ENCODE measurements at regions of chr1 and their contacts with region 1.

Region 1: GRCh38 chr1:160046494-160047110 is 14.8 kb upstream of the PIGM start:
- DNase-seq: peak; percentile 48
- H3K4me3 Mint-ChIP-seq: peak overlapping the region; percentile 55
- H3K27ac Mint-ChIP-seq: peak overlapping the region; percentile 60
- H3K4me1 Mint-ChIP-seq: peaks cover 13% of the 10 kb centered on the region
- H3K27me3 Mint-ChIP-seq: peaks cover 28% of the 10 kb centered on the region

Region 2: DNA sequence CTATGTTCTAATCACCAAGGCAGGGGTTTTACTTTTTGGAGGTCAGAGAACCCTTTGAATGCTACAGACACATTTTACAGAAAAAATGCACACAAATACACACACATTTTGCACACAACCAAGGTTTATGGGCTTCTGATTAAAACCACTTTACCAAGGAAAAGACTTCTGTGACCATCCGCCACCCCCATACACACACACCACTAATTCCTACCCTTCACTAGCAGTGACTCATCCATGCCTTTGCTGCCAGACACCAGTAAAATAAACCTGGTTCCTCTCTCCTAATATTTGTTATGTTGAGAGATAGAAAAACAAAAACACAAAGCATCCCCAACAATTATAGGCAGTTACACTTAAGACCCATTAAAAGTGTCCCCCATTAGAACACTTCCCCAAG is 27.7 kb before region 1 on chr1:
- CTCF ChIA-PET with region 1: interaction called, 11 read pairs
- POLR2A ChIA-PET with region 1: no interaction called
- DNase-seq: no peak
- H3K4me3 Mint-ChIP-seq: no peak overlapping the region
- H3K27ac Mint-ChIP-seq: no peak overlapping the region
- H3K4me1 Mint-ChIP-seq: peaks cover 3% of the 10 kb centered on the region
- H3K27me3 Mint-ChIP-seq: peaks cover 12% of the 10 kb centered on the region

Region 3: GRCh38 chr1:160031365-160032164 is 15.0 kb before region 1 on chr1 and contains the start of gene PIGM:
- CTCF ChIA-PET with region 1: interaction called, 16 read pairs
- POLR2A ChIA-PET with region 1: interaction called, 3 read pairs
- DNase-seq: peak; percentile 97
- H3K4me3 Mint-ChIP-seq: peak within 1 kb of the TSS; percentile 96
- H3K27ac Mint-ChIP-seq: peak within 1 kb of the TSS; percentile 91
- H3K4me1 Mint-ChIP-seq: peaks cover 28% of the 10 kb centered on the region
- H3K27me3 Mint-ChIP-seq: peaks cover 3% of the 10 kb centered on the region
- total RNA-seq, gene PIGM: 5.9 to 6.4 TPM

Region 4: GRCh38 chr1:160058087-160058486 is 11.5 kb after region 1 on chr1:
- CTCF ChIA-PET with region 1: interaction called, 22 read pairs
- POLR2A ChIA-PET with region 1: no interaction called
- DNase-seq: no peak
- H3K4me3 Mint-ChIP-seq: no peak overlapping the region
- H3K27ac Mint-ChIP-seq: no peak overlapping the region
- H3K4me1 Mint-ChIP-seq: no peaks in the 10 kb centered on the region
- H3K27me3 Mint-ChIP-seq: peaks cover 29% of the 10 kb centered on the region

Region 5: GRCh38 chr1:160070243-160071163 is 23.9 kb after region 1 on chr1:
- CTCF ChIA-PET with region 1: interaction called, 17 read pairs
- POLR2A ChIA-PET with region 1: no interaction called
- DNase-seq: peak; percentile 61
- H3K4me3 Mint-ChIP-seq: peak overlapping the region; percentile 75
- H3K27ac Mint-ChIP-seq: no peak overlapping the region
- H3K4me1 Mint-ChIP-seq: peaks cover 18% of the 10 kb centered on the region
- H3K27me3 Mint-ChIP-seq: peaks cover 57% of the 10 kb centered on the region

Region 6: DNA sequence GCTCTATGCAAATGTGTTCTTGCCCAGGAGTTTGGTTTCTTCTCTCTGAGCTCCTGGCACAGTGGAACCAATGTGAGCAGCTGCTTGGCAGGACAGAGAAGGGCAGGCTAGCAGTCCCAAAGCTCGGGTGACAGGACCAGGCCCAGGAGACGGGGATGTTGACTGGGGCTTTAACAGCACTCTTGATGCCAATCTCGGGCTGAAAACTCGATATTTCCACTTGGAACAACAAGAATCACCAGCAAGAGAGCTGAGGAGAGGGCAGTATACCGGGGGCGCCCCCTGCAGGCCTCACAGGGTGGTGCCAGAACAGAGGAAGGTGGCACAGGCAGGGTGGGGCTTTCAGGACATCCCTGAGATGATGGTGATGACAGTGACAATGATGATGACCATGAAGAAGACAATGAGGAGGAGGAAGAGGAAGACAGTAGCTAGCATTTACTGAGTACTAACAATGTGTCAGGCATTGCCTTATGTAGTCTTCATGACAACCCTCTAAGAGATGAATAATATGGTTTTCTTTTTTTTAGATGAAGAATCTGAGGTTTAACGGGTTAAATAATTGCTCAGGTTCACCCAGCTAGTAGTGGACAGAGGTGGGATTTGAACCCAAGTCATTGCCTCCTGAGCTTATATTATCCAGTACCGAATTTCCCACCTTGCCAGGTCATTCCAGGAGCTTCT is 32.1 kb after region 1 on chr1:
- CTCF ChIA-PET with region 1: interaction called, 33 read pairs
- POLR2A ChIA-PET with region 1: no interaction called
- DNase-seq: peak; percentile 65
- H3K4me3 Mint-ChIP-seq: no peak overlapping the region
- H3K27ac Mint-ChIP-seq: no peak overlapping the region
- H3K4me1 Mint-ChIP-seq: peaks cover 2% of the 10 kb centered on the region
- H3K27me3 Mint-ChIP-seq: peaks cover 59% of the 10 kb centered on the region

Region 7: DNA sequence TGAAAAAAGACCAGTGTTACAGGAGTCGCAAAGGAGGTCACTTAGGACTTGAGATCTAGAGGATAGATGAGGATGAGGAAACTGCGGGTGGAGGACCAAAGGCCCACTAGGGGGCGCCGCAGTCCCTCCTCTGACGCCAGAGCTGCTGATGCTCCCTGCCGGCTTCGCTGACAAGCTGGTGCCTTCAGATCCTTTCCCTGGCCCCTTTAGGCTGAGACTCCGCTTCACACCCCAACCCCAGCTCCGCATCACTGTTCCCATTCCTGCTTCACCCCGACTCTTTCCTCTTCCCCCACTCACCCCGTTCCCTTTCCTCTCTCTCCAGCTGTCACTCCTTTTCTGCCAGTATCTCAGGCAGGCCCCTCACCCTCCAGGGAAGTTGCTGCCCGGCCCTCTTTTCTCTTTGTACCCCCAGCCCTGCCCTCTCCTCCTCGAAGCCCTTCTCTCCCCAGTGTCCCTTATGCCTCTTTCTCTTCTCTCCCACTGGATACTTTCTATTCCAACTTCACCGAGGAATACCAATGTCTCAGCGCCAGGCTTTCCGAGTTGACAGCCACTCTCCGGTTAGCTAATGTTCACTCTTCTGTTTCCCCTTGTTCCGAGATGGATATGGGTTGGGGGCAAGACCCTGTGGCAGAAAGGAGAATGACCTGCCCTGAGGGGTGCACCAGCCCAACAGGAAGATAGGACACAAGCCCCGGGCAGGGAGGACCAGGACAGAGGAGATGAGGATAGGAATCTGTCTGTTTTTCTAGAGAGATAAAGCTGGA is 39.3 kb after region 1 on chr1:
- CTCF ChIA-PET with region 1: interaction called, 14 read pairs
- POLR2A ChIA-PET with region 1: no interaction called
- DNase-seq: peak; percentile 79
- H3K4me3 Mint-ChIP-seq: no peak overlapping the region
- H3K27ac Mint-ChIP-seq: no peak overlapping the region
- H3K4me1 Mint-ChIP-seq: peaks cover 14% of the 10 kb centered on the region
- H3K27me3 Mint-ChIP-seq: peaks cover 20% of the 10 kb centered on the region